Activated CD8-positive, alpha-beta T cell treated with anti-CD3 and anti-CD28 coated beads for 36 hours (primary cell): ENCODE measurements at regions of chr6 and their contacts with region 1.

Region 1: DNA sequence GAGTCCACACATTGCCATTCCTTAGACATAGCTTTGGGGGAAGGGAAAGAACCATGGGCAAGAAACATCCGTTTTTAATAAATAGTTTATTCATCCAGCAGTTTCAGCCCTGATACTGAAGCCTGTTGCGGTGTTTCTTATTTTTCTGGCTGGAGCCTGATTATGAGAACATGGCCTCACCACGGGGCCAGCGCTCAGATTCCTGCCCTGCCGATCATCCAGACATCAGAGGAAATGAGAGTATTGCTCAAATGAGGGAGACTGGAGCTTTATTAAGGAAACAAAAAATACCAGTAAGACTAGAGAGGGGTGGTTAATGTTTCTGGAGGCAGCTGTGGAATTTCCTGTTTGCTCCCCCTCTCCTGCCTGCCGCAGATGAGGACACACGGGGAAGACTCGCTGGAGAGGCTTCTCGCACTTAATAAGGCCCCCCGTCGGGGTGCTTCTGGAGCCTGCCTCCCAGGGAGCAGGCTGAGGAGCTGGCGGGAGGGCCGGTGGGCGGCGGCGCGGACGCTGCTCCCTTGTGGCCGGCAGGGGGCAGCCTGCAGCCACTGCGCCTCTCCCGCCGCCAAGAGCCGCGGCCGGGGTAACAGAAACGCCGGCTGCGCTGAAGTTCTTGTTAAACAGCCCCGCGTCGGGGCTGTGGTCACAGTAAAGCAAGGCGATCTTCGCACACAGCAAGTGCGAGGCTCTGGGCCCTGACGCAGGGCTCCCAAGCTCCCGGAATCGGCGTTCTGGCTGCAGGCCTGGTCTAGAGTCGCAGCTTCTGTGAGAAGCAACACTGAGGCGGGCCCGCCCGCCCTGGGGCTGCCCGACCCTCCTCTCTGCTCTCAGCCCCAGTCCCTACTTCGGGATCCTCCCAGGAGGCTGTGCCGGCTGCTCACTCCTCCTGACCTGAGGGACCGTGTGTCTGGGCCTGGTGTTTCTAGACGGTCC is 17.5 kb downstream of the LEMD2 start:
- DNase-seq: peak; percentile 70
- ATAC-seq: peak; percentile 78
- H3K4me3 Mint-ChIP-seq: no peak overlapping the region
- H3K27ac Mint-ChIP-seq: no peak overlapping the region
- H3K4me1 Mint-ChIP-seq: peaks cover 9% of the 10 kb centered on the region
- H3K27me3 Mint-ChIP-seq: peaks cover 10% of the 10 kb centered on the region
- CTCF ChIP-seq: peak; percentile 97

Region 2: GRCh38 chr6:33508935-33509926 is 262.2 kb before region 1 on chr6:
- CTCF ChIA-PET with region 1: no interaction called
- POLR2A ChIA-PET with region 1: no interaction called
- intact Hi-C with region 1: no loop called
- DNase-seq: no peak
- ATAC-seq: no peak
- H3K4me3 Mint-ChIP-seq: no peak overlapping the region
- H3K27ac Mint-ChIP-seq: no peak overlapping the region
- H3K4me1 Mint-ChIP-seq: peaks cover 10% of the 10 kb centered on the region
- H3K27me3 Mint-ChIP-seq: peaks cover 2% of the 10 kb centered on the region
- CTCF ChIP-seq: no peak

Region 3: GRCh38 chr6:33744001-33744848 is 27.2 kb before region 1 on chr6:
- CTCF ChIA-PET with region 1: interaction called, 87 read pairs
- POLR2A ChIA-PET with region 1: interaction called, 3 read pairs
- intact Hi-C with region 1: no loop called
- DNase-seq: peak; percentile 87
- ATAC-seq: peak; percentile 87
- H3K4me3 Mint-ChIP-seq: no peak overlapping the region
- H3K27ac Mint-ChIP-seq: no peak overlapping the region
- H3K4me1 Mint-ChIP-seq: peaks cover 2% of the 10 kb centered on the region
- H3K27me3 Mint-ChIP-seq: peaks cover 5% of the 10 kb centered on the region
- CTCF ChIP-seq: peak; percentile 84

Region 4: GRCh38 chr6:33794891-33795623 is 23.6 kb after region 1 on chr6:
- CTCF ChIA-PET with region 1: interaction called, 12 read pairs
- POLR2A ChIA-PET with region 1: no interaction called
- intact Hi-C with region 1: no loop called
- DNase-seq: no peak
- ATAC-seq: no peak
- H3K4me3 Mint-ChIP-seq: no peak overlapping the region
- H3K27ac Mint-ChIP-seq: no peak overlapping the region
- H3K4me1 Mint-ChIP-seq: no peaks in the 10 kb centered on the region
- H3K27me3 Mint-ChIP-seq: peaks cover 10% of the 10 kb centered on the region
- CTCF ChIP-seq: no peak

Region 5: DNA sequence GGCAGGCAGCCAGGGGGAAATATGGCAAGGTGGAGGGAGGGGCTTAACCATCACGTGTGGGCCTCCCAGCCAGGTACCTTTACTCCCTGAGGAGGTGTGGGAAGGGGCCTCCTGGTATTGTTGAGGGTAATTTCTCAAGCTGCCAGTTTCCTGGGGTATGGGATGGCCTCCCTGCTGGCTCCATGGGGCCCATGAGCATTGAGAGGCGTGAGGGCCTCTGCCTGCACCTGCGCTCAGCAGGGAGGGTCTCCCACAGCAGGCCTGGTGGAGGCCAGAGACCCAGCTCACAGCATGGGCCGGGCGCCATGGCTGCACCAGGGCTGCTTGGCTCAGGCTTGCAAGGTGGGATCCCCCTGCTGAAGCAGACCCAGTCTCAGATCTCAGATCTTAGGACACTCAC is 261.4 kb after region 1 on chr6:
- CTCF ChIA-PET with region 1: interaction called, 132 read pairs
- POLR2A ChIA-PET with region 1: no interaction called
- intact Hi-C with region 1: loop called (anchors 5 kb)
- DNase-seq: no peak
- ATAC-seq: no peak
- H3K4me3 Mint-ChIP-seq: no peak overlapping the region
- H3K27ac Mint-ChIP-seq: no peak overlapping the region
- H3K4me1 Mint-ChIP-seq: no peaks in the 10 kb centered on the region
- H3K27me3 Mint-ChIP-seq: peaks cover 3% of the 10 kb centered on the region
- CTCF ChIP-seq: no peak